K562 (cell line): ENCODE measurements at regions of chr17 and their contacts with region 1.

Region 1: DNA sequence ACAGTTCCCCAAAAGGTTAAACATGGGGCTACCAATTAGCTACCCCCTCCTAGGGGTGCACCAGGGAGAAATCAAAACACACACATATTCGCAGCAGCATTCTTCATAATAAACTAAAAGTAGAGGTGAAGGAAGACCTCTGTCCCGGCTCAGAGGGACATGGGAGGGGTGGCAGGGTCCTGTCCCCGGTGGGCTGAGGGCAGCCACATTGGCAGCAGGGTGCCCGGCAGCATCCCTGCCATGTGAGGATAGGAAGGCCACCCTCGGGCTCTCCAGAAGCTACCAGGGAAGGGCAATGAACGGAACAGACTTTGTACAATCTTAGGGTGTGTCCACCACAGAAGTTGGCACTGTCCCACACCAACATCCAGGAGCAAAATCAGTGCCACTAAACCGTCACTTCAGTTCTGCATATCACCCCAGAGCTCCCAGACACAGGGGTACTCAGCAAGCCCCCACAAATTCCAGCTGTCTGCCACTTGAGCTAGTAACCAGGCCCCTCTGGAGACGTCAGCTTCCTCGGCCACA is 3.1 kb upstream of the DNAH17 start:
- DNase-seq: no peak
- ATAC-seq: no peak
- H3K4me3 ChIP-seq: no peak overlapping the region
- H3K27ac ChIP-seq: no peak overlapping the region
- H3K4me1 ChIP-seq: no peaks in the 10 kb centered on the region; a peak in 1 of 5 replicates
- H3K27me3 ChIP-seq: peaks cover 39 to 60% of the 10 kb centered on the region in 2 experiments
- CTCF ChIP-seq: no peak
- EP300 ChIP-seq: no peak
- POLR2A ChIP-seq: no peak
- RAD21 ChIP-seq: no peak

Region 2: DNA sequence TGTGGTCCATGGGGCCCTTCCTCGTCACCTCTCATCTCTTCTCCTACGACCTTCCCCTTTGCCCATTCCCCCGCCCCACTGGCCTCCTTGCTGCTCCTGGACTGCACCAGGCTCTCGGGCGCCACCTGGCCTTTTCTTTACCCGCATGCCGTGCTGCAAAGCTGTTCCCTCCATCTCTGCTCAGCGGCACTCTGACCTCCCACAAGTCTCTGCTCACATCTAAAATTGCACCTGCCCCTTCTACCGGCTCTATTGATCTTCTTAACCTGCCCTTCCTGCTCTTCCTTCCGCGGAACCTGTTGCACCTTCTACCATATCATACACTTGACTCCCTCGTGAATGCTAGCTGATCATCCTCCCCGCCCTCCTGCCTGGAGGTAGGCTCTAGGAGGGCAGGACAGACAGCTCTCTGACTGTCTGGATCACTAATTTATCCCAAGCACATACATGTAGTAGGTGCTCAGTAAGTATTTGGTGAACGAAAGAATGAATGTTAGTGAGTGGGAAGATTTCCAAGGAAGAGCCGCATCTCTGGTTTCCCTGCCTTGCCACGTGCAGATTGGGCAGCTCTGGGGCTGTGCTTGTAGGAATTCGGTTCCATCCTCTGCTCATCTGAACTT is 20.5 kb before region 1 on chr17:
- CTCF ChIA-PET with region 1: no interaction called
- POLR2A ChIA-PET with region 1: interaction called, 12 read pairs
- in situ Hi-C with region 1: no loop called
- intact Hi-C with region 1: no loop called
- DNase-seq: peak; percentile 52 to 62 (median 56)
- ATAC-seq: peak; percentile 90
- H3K4me3 ChIP-seq: no peak overlapping the region
- H3K27ac ChIP-seq: no peak overlapping the region
- H3K4me1 ChIP-seq: peaks cover 0 to 4% of the 10 kb centered on the region in 2 experiments; a peak in 1 of 5 replicates
- H3K27me3 ChIP-seq: peaks cover 47 to 84% of the 10 kb centered on the region in 2 experiments
- CTCF ChIP-seq: peak; percentile 65 to 67 (median 65)
- EP300 ChIP-seq: no peak
- POLR2A ChIP-seq: no peak
- RAD21 ChIP-seq: peak in 1 of 2 experiments; percentile 54; a peak in 2 of 4 replicates